Psoas muscle (tissue), 8 donors: ENCODE measurements at regions of chr2 and their contacts with region 1.

Region 1: DNA sequence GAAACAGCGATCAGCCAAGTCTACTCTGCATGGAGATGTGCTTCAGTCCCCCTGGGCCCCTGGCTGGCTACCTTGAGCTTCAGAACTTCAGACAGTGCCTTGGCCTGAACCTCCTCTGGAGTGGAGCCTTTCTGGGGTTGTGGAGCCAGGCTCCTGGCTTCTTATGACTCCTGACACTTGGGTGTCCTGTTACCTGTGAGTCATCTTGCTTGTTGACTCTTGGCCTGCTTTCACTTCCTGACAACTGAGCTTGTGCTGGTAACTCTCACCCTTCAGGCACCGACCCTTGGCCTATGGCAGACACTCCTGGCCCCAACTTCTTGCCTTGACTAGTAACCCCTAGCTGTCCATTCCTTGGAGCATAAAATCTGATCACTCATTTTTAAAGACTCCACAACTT is 46.5 kb upstream of the VIT start:
- DNase-seq: peak; percentile 25 to 76
- ATAC-seq: peak; percentile 95 to 97 (median 96)
- H3K4me3 ChIP-seq: peak overlapping the region; percentile 13
- H3K27ac ChIP-seq: peak overlapping the region; percentile 87
- H3K4me1 ChIP-seq: peaks cover 38% of the 10 kb centered on the region
- H3K27me3 ChIP-seq: no peaks in the 10 kb centered on the region
- CTCF ChIP-seq: no peak

Region 2: GRCh38 chr2:36597532-36598377 is 52.3 kb before region 1 on chr2 and contains the start of gene FEZ2:
- intact Hi-C with region 1: loop called (anchors 2 to 5 kb)
- DNase-seq: peak; percentile 81 to 91
- ATAC-seq: peak; percentile 92 to 96 (median 94)
- H3K4me3 ChIP-seq: peak within 1 kb of the TSS; percentile 99
- H3K27ac ChIP-seq: peak within 1 kb of the TSS; percentile 97
- H3K4me1 ChIP-seq: peaks cover 28% of the 10 kb centered on the region
- H3K27me3 ChIP-seq: no peaks in the 10 kb centered on the region
- CTCF ChIP-seq: no peak
- total RNA-seq, gene FEZ2: 61.5 to 291 (median 181) TPM